A549 (cell line): ENCODE measurements at regions of chr1 and their contacts with region 1.

Region 1: GRCh38 chr1:201709564-201710295 is 119.2 kb upstream of the IPO9 start:
- DNase-seq: peak; percentile 54 to 82
- ATAC-seq: peak; percentile 62 to 80; a peak in 4 of 6 replicates
- H3K4me3 ChIP-seq: no peak overlapping the region
- H3K27ac ChIP-seq: peak overlapping the region; percentile 59 to 95
- H3K4me1 ChIP-seq: peaks cover 43% of the 10 kb centered on the region
- CTCF ChIP-seq: peak; percentile 92
- EP300 ChIP-seq: no peak
- POLR2A ChIP-seq: no peak
- RAD21 ChIP-seq: peak; percentile 95 to 97

Region 2: GRCh38 chr1:201481761-201482493 is 227.8 kb before region 1 on chr1:
- CTCF ChIA-PET with region 1: interaction called, 11 read pairs
- POLR2A ChIA-PET with region 1: no interaction called
- DNase-seq: peak; percentile 86 to 92
- ATAC-seq: peak; percentile 55 to 83
- H3K4me3 ChIP-seq: no peak overlapping the region
- H3K27ac ChIP-seq: peak overlapping the region; percentile 77 to 86
- H3K4me1 ChIP-seq: peaks cover 50% of the 10 kb centered on the region
- CTCF ChIP-seq: peak; percentile 93
- EP300 ChIP-seq: no peak
- POLR2A ChIP-seq: no peak
- RAD21 ChIP-seq: peak; percentile 97 to 98

Region 3: GRCh38 chr1:201551877-201552731 is 157.6 kb before region 1 on chr1:
- CTCF ChIA-PET with region 1: interaction called, 437 read pairs
- POLR2A ChIA-PET with region 1: interaction called, 4 read pairs
- DNase-seq: peak; percentile 57 to 69
- ATAC-seq: peak; percentile 75 to 78
- H3K4me3 ChIP-seq: no peak overlapping the region
- H3K27ac ChIP-seq: peak overlapping the region; percentile 59 to 86
- H3K4me1 ChIP-seq: peaks cover 11% of the 10 kb centered on the region
- CTCF ChIP-seq: no peak
- EP300 ChIP-seq: no peak
- POLR2A ChIP-seq: no peak
- RAD21 ChIP-seq: no peak

Region 4: GRCh38 chr1:201608635-201609395 is 100.9 kb before region 1 on chr1:
- CTCF ChIA-PET with region 1: interaction called, 14 read pairs
- POLR2A ChIA-PET with region 1: no interaction called
- DNase-seq: no peak
- ATAC-seq: 0 out of 6 replicates have a peak, but pooled peaks of 1 of the 2 experiments have one; percentile 4
- H3K4me3 ChIP-seq: no peak overlapping the region
- H3K27ac ChIP-seq: peak overlapping the region in 1 of 2 experiments; percentile 62; a peak in 3 of 6 replicates
- H3K4me1 ChIP-seq: peaks cover 24% of the 10 kb centered on the region
- CTCF ChIP-seq: no peak
- EP300 ChIP-seq: no peak
- POLR2A ChIP-seq: no peak
- RAD21 ChIP-seq: no peak

Region 5: GRCh38 chr1:201739492-201740085 is 29.9 kb after region 1 on chr1:
- CTCF ChIA-PET with region 1: interaction called, 15 read pairs
- POLR2A ChIA-PET with region 1: no interaction called
- DNase-seq: no peak
- ATAC-seq: peak in 1 of 2 experiments; percentile 65; a peak in 3 of 6 replicates
- H3K4me3 ChIP-seq: no peak overlapping the region
- H3K27ac ChIP-seq: peak overlapping the region in 1 of 2 experiments; percentile 10; a peak in 1 of 6 replicates
- H3K4me1 ChIP-seq: peaks cover 6% of the 10 kb centered on the region; the same call in 1 of the 3 replicates
- CTCF ChIP-seq: no peak
- EP300 ChIP-seq: no peak
- POLR2A ChIP-seq: no peak
- RAD21 ChIP-seq: no peak

Region 6: DNA sequence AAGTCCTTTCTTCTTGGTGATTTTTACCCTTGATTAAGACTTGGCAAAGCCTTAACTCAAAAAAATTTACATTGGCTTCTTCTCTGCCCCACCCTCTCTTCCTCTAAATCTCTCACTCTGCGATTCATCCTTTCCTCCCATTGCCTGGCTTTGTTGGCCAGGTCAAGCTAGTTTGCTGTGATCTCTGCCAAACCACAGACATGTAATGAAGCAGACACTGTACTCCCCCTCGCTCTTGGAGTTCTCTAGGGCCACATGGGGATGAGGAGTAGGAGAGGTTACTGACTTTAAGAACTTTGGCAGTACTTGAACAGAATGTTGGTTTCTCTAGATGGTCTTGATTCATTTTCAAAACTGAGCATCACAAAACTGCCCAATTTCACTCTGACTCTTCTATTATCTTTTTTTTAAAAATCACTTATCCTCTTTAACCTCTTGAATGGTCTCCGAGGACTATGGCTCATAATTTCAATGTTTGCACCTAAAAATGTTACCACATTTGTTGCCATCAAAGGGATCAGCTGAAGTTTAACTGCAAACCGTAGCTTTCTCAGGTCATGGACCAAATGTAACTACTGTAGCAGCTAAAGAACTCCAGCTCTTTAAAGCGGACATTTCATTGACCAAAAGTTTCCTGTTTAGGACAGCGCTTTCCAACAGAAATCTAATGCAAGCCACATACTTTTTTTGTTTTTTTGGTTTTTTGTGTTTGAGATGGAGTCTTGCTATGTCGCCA is 56.6 kb after region 1 on chr1:
- CTCF ChIA-PET with region 1: interaction called, 17 read pairs
- POLR2A ChIA-PET with region 1: no interaction called
- DNase-seq: no peak
- ATAC-seq: peak in 1 of 2 experiments; percentile 61; a peak in 2 of 6 replicates
- H3K4me3 ChIP-seq: no peak overlapping the region
- H3K27ac ChIP-seq: no peak overlapping the region
- H3K4me1 ChIP-seq: 0 out of 3 replicates have a peak, but pooled peaks cover 4% of the 10 kb centered on the region
- CTCF ChIP-seq: no peak
- EP300 ChIP-seq: no peak
- POLR2A ChIP-seq: no peak
- RAD21 ChIP-seq: no peak

Region 7: DNA sequence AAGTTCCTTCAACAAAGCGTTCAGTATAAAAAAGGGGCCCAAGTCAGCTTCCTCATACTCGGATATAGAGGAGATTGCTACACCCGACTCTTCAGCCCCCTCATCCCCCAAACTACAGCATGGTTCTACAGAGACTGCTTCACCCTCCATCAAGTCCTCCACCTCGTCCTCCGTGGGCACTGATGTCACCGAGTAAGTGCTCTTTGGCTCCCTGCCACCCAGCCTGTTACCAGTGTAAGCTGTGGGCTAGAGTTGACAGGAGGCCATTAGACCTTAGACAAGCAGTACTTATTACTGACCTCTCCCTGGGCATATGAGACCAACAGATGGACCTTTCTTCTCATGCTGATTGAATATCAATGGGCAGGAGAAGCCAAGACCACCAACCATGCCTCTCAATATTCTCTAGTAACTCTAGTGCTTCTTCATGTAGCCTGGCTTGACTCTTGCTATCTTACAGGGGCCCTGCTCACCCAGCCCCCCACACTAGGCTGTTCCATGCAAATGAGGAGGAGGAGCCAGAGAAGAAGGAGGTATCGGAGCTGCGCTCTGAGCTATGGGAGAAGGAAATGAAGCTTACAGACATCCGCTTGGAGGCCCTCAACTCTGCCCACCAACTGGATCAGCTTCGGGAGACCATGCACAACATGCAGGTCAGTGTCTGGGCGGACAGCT is 98.4 kb after region 1 on chr1:
- CTCF ChIA-PET with region 1: interaction called, 24 read pairs
- POLR2A ChIA-PET with region 1: no interaction called
- DNase-seq: no peak
- ATAC-seq: no peak
- H3K4me3 ChIP-seq: no peak overlapping the region
- H3K27ac ChIP-seq: no peak overlapping the region
- H3K4me1 ChIP-seq: no peaks in the 10 kb centered on the region
- CTCF ChIP-seq: no peak
- EP300 ChIP-seq: no peak
- POLR2A ChIP-seq: no peak
- RAD21 ChIP-seq: no peak

Region 8: DNA sequence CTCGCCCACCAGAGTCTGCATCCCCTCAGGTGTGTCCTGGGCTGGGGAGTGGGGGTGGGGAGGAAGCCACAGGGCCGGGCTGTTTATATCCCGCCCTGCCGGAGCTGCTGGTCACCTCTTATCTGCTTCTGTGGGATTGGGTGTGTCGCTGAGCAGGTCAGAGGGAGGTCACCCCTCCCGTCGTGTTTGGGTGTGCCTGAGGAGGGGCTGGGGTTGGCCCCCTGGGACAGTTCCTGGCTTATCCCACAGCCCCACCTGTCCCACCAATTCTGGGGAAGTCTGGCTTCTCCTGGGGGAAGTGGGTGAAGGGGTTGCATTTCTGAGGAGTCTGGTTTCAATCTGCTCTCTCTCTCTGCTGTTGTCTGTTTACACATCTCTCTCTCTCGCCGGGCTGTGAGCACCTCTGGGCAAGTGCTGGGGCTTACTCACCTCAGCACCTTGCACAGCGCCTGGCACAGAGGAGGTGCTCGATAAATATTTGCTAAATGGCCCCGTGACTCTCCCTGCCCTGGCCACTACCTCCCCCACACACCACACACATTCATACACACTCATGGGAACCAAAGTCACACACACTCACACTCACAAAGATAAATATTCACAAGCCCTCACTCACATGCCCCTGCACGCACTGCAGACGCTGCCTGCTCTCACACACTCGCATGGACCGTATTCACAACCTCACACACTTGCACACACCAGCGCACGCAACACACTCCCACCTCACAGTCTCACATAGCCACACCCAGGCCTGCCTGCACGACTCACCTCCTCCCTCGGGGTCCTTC is 308.9 kb after region 1 on chr1:
- CTCF ChIA-PET with region 1: no interaction called
- POLR2A ChIA-PET with region 1: no interaction called
- DNase-seq: peak; percentile 81 to 99
- ATAC-seq: peak; percentile 71
- H3K4me3 ChIP-seq: peak overlapping the region; percentile 23; the same call in 2 of the 3 replicates
- H3K27ac ChIP-seq: peak overlapping the region; percentile 93 to 94
- H3K4me1 ChIP-seq: peaks cover 91% of the 10 kb centered on the region
- CTCF ChIP-seq: no peak
- EP300 ChIP-seq: peak; percentile 89 to 90; a peak in 3 of 5 replicates
- POLR2A ChIP-seq: no peak
- RAD21 ChIP-seq: peak; percentile 26 to 68; a peak in 4 of 5 replicates